Dendritic cell treated with granulocyte-macrophage colony-stimulating factor and Interleukin-4, amounts not matched to agents 40 ng/mL and 50 ng/mL, for 4 days (primary cell): ENCODE measurements at regions of chr6 and their contacts with region 1.

Region 1: DNA sequence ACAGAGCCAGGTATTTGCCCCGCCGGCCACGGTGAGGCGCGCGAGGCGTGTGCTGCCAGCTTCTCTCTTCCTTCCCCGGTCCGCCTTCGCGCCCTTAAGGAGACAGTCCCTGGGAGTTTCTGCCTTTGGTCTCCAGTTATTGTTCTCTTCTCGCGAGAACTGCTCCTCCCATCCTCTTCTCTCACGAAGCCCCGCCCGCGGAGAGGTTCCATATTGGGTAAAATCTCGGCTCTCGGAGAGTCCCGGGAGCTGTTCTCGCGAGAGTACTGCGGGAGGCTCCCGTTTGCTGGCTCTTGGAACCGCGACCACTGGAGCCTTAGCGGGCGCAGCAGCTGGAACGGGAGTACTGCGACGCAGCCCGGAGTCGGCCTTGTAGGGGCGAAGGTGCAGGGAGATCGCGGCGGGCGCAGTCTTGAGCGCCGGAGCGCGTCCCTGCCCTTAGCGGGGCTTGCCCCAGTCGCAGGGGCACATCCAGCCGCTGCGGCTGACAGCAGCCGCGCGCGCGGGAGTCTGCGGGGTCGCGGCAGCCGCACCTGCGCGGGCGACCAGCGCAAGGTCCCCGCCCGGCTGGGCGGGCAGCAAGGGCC is at the start of gene MAPK14:
- H3K4me3 Mint-ChIP-seq: peak within 1 kb of the TSS; percentile 88
- H3K27ac Mint-ChIP-seq: peak within 1 kb of the TSS; percentile 91
- H3K4me1 Mint-ChIP-seq: peaks cover 39% of the 10 kb centered on the region
- H3K27me3 Mint-ChIP-seq: peaks cover 2% of the 10 kb centered on the region

Region 2: DNA sequence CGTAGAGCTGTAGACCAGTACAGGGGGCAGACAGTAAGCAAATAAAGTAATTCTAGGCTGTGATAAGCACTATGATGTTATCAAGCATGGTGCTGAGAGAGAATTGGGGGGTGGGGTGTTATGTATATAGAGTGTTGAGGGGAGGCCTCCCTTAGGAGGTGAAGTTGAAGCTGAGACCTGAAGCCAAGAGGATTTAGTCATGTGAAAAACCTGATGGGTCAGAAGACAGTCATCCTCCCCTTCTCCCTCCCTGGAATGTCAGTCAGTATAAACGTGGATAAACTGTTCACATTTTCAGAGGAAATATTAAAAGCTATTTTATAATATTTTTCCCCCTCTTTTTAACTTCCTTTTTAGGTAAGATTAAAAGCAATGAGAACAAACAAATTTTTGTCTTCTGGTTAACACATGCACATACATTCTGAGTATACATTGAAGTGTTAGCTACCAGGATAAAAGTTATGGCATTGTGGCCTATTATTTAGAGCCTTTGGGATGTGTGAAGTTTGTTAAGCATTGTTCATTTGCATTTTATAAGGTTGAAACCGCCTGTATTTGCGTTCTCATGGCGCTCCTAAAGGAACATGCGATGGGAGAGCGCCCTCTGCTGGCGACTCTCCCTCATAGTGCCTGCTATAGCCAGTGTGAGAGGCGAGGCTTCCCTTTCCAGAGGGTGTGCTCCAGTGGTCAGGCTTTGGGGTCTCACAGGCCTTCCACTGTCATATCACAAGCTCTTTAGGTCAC is 67.3 kb after region 1 on chr6:
- intact Hi-C with region 1: loop called (anchors 1 kb)
- H3K4me3 Mint-ChIP-seq: no peak overlapping the region
- H3K27ac Mint-ChIP-seq: peak overlapping the region; percentile 29
- H3K4me1 Mint-ChIP-seq: peaks cover 16% of the 10 kb centered on the region
- H3K27me3 Mint-ChIP-seq: no peaks in the 10 kb centered on the region